ENCODE measurements at regions of chr12 and their contacts with region 1.

Region 1: GRCh38 chr12:47014474-47014873 is 64.9 kb upstream of the PCED1B start:
- DNase-seq: no peak
- ATAC-seq: peak; percentile 63; the same call in 1 of the 2 replicates
- H3K4me3 ChIP-seq: no peak overlapping the region
- H3K27ac ChIP-seq: no peak overlapping the region
- H3K4me1 ChIP-seq: no peaks in the 10 kb centered on the region
- H3K27me3 ChIP-seq: no peaks in the 10 kb centered on the region
- CTCF ChIP-seq: no peak

Region 2: DNA sequence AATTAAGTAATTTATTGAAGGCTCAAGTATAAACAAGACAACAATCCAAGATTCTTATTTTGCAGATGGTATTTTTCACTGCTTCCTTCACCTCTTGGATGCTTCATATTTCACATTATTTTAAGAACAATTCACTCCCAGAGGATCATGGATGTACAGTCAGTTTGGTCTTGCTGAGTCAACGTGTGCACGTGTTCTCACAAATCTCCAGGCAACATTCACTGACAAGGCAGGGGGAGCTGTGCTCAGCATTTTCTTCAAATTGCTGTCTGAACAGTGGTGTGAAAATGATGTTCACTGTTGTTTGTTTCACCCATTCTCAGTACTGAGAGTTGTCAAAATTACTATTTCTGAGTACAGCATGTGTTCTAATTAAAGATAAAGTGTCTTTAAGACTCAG is 70.4 kb before region 1 on chr12:
- CTCF ChIA-PET with region 1: no interaction called
- POLR2A ChIA-PET with region 1: no interaction called
- in situ Hi-C with region 1: no loop called
- intact Hi-C with region 1: loop called (anchors 10 kb)
- DNase-seq: no peak
- ATAC-seq: no peak
- H3K4me3 ChIP-seq: no peak overlapping the region
- H3K27ac ChIP-seq: no peak overlapping the region
- H3K4me1 ChIP-seq: 0 out of 2 replicates have a peak, but pooled peaks cover 2% of the 10 kb centered on the region
- H3K27me3 ChIP-seq: no peaks in the 10 kb centered on the region
- CTCF ChIP-seq: peak; percentile 26; the same call in 1 of the 2 replicates